Breast epithelium (tissue), 4 donors: ENCODE measurements at regions of chr3 and their contacts with region 1.

Region 1: GRCh38 chr3:187085021-187085666 is 54.2 kb downstream of the RPL39L start:
- DNase-seq: no peak
- H3K4me3 ChIP-seq: no peak overlapping the region
- H3K27ac ChIP-seq: no peak overlapping the region
- H3K4me1 ChIP-seq: no peaks in the 10 kb centered on the region
- H3K27me3 ChIP-seq: no peaks in the 10 kb centered on the region
- CTCF ChIP-seq: no peak
- POLR2A ChIP-seq: no peak

Region 2: GRCh38 chr3:187025656-187026316 is 59.4 kb before region 1 on chr3:
- intact Hi-C with region 1: loop called (anchors 2 kb)
- DNase-seq: no peak
- H3K4me3 ChIP-seq: no peak overlapping the region
- H3K27ac ChIP-seq: no peak overlapping the region
- H3K4me1 ChIP-seq: no peaks in the 10 kb centered on the region
- H3K27me3 ChIP-seq: no peaks in the 10 kb centered on the region
- CTCF ChIP-seq: no peak
- POLR2A ChIP-seq: no peak